Calu3 (cell line): ENCODE measurements at regions of chr2 and their contacts with region 1.

Region 1: DNA sequence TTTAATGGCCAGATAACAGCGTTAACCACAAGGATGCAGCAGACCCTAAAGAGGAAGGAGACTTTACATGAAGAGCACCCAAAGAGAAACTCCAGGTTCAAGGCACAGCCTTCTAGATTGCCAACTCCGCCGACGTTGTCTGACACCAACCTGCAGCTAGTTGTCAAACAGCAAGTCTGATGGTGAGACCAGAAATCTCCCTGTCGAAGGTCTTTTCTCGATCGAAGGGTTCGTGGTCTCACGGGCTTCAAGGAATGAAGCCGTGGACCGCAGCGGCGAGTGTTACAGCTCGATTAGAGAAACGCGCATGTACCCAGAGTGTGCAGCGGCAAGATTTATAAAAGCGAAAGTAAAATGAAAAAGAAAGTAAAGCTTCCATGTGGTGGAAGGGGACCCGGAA is 656.3 kb downstream of the XIRP2 start:
- DNase-seq: no peak
- H3K4me3 Mint-ChIP-seq: no peak overlapping the region
- H3K27ac Mint-ChIP-seq: no peak overlapping the region
- H3K4me1 Mint-ChIP-seq: no peaks in the 10 kb centered on the region
- H3K27me3 Mint-ChIP-seq: no peaks in the 10 kb centered on the region
- CTCF ChIP-seq: no peak

Region 2: GRCh38 chr2:167264380-167264779 is 280.2 kb before region 1 on chr2:
- CTCF ChIA-PET with region 1: no interaction called
- intact Hi-C with region 1: loop called (anchors 10 kb)
- DNase-seq: peak; percentile 43
- H3K4me3 Mint-ChIP-seq: no peak overlapping the region
- H3K27ac Mint-ChIP-seq: no peak overlapping the region
- H3K4me1 Mint-ChIP-seq: no peaks in the 10 kb centered on the region
- H3K27me3 Mint-ChIP-seq: no peaks in the 10 kb centered on the region
- CTCF ChIP-seq: peak; percentile 27